Heart right ventricle (tissue), 16 donors: ENCODE measurements at regions of chr2 and their contacts with region 1.

Region 1: GRCh38 chr2:172588931-172589330 is 33.0 kb downstream of the PDK1 start:
- DNase-seq: no peak
- ATAC-seq: no peak
- H3K4me3 ChIP-seq: no peak overlapping the region
- H3K27ac ChIP-seq: no peak overlapping the region
- H3K4me1 ChIP-seq: peaks cover 0 to 8% (median 0%) of the 10 kb centered on the region in 9 donors
- H3K27me3 ChIP-seq: no peaks in the 10 kb centered on the region
- CTCF ChIP-seq: no peak

Region 2: DNA sequence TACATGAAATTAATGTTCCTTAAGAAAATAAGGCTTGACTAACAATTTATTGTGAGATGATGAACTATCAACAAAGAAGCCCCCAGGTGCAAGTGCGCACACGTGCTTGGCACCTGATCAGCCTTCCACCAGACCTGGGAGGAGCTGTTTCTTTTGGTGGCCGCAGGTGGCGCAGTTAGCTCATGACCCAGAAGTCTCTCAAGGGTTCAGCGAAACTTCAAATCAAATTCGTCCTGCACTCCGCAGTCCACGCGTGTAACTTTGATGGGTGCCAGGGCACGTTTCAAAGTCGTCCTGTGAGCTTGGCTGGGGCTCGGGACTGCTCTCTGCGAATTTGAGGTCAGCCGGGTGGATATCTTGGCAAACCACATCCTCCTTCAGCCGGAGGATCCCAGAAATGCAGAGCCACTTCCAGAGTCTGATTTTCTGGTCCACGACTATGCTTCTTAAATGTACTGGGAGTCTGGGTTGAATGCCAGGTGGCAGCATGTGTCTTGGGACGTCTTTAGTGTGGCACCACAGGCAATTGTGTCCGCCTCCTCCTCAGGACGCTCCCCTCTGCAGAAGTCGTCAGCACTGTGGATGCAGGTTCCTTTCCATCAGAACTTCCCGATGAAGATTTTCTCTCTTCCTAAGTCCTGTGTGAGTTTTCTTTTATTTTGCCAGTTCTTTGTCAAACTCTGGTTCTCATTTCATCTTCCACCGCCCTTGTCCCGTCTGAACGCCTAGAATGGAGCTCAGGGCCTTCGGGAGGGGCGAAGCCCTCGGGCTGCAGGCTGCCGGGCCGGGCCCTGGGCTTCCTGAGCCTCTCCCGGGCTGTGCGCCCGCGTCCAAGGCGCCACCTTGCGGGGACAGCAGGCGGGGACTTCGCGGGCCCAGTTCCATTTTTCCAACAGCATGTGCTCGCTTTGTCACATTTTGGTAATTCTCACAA is 85.4 kb after region 1 on chr2:
- intact Hi-C with region 1: loop called in 4 of 10 experiments (anchors 5 to 10 kb)
- DNase-seq: peak; percentile 16 to 55
- ATAC-seq: peak; percentile 64 to 89 (median 79)
- H3K4me3 ChIP-seq: peak overlapping the region in 3 of 10 donors; percentile 5 to 14 (median 10)
- H3K27ac ChIP-seq: no peak overlapping the region
- H3K4me1 ChIP-seq: peaks cover 0 to 4% (median 0%) of the 10 kb centered on the region in 9 donors
- H3K27me3 ChIP-seq: no peaks in the 10 kb centered on the region
- CTCF ChIP-seq: peak; percentile 38 to 74 (median 58)

Region 3: GRCh38 chr2:172710584-172711024 is 121.7 kb after region 1 on chr2:
- intact Hi-C with region 1: loop called in 7 of 10 experiments (anchors 2 to 10 kb)
- DNase-seq: no peak
- ATAC-seq: peak; percentile 23 to 87 (median 72)
- H3K4me3 ChIP-seq: no peak overlapping the region
- H3K27ac ChIP-seq: peak overlapping the region in 6 of 10 donors; percentile 3 to 79 (median 62)
- H3K4me1 ChIP-seq: peaks cover 0 to 21% (median 6%) of the 10 kb centered on the region in 9 donors
- H3K27me3 ChIP-seq: peaks cover 0 to 26% (median 3%) of the 10 kb centered on the region in 7 donors
- CTCF ChIP-seq: peak in 8 of 9 donors; percentile 30 to 75 (median 64)